Activated CD4-positive, alpha-beta T cell treated with anti-CD3 and anti-CD28 coated beads, Interleukin-2, amount 10 ng/mL, durations not matched to agents 24 days and 14 days (primary cell): ENCODE measurements at regions of chr11 and their contacts with region 1.

Region 1: GRCh38 chr11:60775420-60775961 is 9.6 kb upstream of the MS4A10 start:
- DNase-seq: peak; percentile 93
- H3K4me3 Mint-ChIP-seq: no peak overlapping the region
- H3K27ac Mint-ChIP-seq: no peak overlapping the region
- H3K4me1 Mint-ChIP-seq: peaks cover 4% of the 10 kb centered on the region
- H3K27me3 Mint-ChIP-seq: peaks cover 13% of the 10 kb centered on the region

Region 2: DNA sequence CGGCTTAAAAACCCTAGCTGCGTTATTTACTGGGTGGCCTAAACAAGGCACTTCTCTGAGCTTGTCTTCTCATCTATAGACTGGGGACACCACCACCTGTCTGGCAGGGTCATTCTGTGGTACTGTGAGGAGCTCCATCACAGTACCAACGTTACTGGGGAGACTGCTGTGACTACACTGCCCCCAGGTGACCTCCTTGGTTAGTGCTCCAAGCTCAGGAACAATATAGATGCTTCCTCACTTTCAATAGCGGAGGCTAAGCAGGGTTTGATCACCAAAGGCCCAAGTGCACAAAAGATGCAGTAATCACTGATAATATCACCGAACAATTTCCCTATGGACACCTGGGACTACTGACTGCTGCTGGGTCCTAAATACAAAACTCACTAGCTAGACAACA is 112.1 kb after region 1 on chr11:
- intact Hi-C with region 1: loop called (anchors 1 kb)
- DNase-seq: peak; percentile 82
- H3K4me3 Mint-ChIP-seq: no peak overlapping the region
- H3K27ac Mint-ChIP-seq: no peak overlapping the region
- H3K4me1 Mint-ChIP-seq: peaks cover 5% of the 10 kb centered on the region
- H3K27me3 Mint-ChIP-seq: no peaks in the 10 kb centered on the region

Region 3: DNA sequence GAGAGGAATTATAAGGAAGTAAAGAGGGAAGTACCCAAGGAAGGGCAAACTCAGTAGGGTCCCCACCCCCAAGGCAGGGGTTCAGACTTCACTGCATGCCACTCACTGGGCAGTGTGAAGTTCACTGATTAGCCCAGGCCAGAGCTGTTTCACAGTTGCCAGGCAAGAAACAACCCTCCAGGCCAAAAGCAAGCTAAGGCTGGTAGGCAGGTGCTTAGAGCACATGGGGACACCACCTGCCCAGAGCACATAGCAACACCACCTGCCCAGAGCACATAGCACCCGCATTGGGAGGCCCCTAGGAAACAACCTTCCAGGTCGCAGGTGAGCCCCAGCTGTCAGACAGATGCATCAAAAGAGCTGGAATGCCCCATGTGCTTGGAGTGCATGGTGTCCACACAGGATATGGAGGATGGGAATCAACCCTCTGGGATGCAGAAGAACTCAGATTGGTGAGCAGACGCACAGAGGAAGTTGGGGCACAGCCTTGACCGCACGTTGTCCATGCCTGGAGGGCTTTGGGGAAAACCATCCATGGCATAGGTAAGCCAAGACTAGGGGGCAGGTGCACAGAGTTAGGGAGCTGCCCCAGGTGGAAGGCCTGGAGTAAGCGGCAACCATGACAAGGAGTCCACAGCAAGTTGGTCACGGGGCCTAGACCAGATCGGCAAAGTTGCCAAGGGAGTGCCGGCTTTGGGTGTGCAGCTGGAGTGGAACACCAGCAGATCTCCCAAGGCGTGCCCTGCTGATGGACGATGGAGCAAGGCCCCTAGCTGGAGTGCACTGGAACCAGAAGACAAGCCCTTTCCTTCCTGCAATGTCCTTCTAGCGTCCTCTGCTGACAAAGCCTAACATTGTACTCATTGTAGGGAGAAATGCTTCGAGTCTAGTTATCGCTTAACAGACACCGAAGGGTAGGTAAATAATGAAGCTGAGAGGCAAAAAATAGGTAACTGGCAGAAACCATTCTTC is 609.1 kb after region 1 on chr11:
- intact Hi-C with region 1: loop called (anchors 5 kb)
- DNase-seq: no peak
- H3K4me3 Mint-ChIP-seq: no peak overlapping the region
- H3K27ac Mint-ChIP-seq: no peak overlapping the region
- H3K4me1 Mint-ChIP-seq: peaks cover 6% of the 10 kb centered on the region
- H3K27me3 Mint-ChIP-seq: no peaks in the 10 kb centered on the region